A549 (cell line): ENCODE measurements at regions of chr9 and their contacts with region 1.

Region 1: DNA sequence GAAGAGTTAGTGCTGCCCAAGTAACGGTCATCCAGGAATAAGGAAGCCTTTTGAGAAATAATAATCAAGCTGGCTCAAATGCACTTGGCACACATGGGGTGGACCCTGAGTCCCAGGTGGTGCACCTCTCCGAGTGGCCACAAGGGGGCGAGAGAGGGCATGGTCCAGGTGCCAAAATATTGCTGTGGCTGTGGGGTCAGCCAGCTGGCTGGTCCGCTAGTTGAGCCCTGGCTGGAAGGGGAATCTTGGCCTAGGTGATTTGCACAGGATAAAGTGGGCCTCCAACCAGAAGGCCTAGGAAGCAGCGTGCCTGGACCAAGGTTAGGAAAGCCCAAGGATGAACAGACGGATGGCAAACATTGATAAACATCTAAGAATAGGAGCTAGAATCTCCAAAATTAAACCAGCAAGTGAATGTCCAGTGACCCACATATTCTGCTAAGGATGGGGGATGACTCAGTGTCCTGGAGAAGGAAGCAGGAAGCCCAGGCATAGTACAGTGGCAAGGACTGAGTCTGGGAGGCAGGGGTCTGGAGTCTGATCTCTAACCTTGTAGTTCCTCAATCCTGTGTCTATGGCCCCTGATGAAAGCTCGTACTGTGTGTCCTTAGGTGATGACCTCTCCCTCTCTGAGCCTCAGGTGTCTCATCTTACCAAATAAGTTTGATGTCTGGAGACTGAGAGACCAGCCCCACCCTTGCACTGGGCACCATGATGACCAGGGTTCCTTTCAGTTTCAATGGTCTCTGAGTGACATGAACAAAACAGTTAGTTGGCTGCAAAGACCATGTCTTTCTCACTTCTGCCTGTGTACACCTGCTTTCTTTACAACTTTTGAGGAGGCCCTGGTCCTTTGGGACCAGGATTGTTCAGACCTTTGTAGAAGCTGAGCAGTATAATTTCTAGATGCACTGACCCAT is 19.2 kb upstream of the SHB start:
- DNase-seq: peak; percentile 49 to 78
- ATAC-seq: peak; percentile 73 to 90
- H3K4me3 ChIP-seq: no peak overlapping the region
- H3K27ac ChIP-seq: no peak overlapping the region
- H3K4me1 ChIP-seq: no peaks in the 10 kb centered on the region
- CTCF ChIP-seq: peak; percentile 82
- EP300 ChIP-seq: no peak
- POLR2A ChIP-seq: no peak
- RAD21 ChIP-seq: peak; percentile 79 to 83

Region 2: DNA sequence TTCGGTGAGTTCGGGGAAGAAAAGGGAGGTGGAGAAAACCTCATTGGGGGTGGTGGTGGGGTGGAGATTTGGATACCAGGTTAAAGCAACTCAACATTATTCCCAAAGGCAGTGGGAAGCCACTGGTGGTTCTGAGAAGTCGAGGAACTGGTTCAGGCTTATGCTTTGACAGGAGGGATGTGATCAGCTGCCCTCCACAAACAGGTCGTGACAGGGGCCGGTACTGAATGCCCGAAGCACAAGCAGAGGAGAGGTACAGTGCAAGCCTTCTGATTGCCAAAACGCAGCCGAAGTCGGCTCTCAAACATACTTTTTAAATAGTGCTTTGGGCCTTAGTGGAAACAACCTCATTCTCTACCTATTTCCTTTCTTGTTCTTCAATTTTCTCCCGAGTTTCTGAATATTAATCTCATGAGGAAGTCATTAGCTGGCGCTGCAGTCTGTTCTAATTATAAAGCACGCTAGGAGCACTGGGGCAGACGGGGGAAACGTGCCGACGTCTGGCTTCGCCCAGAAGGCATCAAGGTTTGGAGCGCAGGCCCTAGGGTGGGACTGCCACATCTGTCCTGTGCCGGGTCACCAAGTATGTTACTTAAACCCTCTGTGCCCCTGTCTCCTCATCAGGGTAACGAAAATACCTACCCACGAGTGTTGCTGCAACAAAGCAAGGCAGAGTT is 46.6 kb before region 1 on chr9:
- CTCF ChIA-PET with region 1: no interaction called
- POLR2A ChIA-PET with region 1: no interaction called
- DNase-seq: no peak
- ATAC-seq: no peak
- H3K4me3 ChIP-seq: no peak overlapping the region
- H3K27ac ChIP-seq: peak overlapping the region in 1 of 2 experiments; percentile 97; a peak in 3 of 6 replicates
- H3K4me1 ChIP-seq: peaks cover 89% of the 10 kb centered on the region
- CTCF ChIP-seq: no peak
- EP300 ChIP-seq: no peak
- POLR2A ChIP-seq: no peak
- RAD21 ChIP-seq: no peak

Region 3: DNA sequence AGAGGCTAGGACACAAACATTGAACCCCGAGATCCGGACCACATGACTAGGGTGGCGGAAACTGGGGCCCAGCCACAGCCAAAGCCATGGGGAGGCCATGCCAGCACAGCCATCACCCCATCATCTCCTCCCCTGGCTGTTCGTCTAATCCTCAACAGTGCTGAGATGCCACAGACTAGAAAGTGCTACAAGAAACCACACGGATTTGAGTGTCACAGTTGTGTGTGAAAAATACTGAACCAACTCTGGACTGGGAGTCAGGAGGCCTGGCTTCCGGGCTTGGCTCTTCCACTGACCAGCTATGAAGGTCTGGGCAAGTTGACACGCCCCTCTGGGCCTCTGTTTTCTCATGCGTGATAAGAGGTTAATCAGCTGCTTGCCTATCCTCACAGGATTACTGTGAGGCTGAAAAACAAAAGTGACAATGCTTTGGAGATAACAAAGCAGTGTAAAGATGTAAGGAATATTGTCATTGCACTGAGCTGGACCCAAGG is 19.6 kb after region 1 on chr9:
- CTCF ChIA-PET with region 1: interaction called, 24 read pairs
- POLR2A ChIA-PET with region 1: no interaction called
- DNase-seq: no peak
- ATAC-seq: no peak
- H3K4me3 ChIP-seq: no peak overlapping the region
- H3K27ac ChIP-seq: no peak overlapping the region
- H3K4me1 ChIP-seq: no peaks in the 10 kb centered on the region
- CTCF ChIP-seq: no peak
- EP300 ChIP-seq: no peak
- POLR2A ChIP-seq: no peak
- RAD21 ChIP-seq: no peak

Region 4: GRCh38 chr9:38160613-38161215 is 72.4 kb after region 1 on chr9:
- CTCF ChIA-PET with region 1: interaction called, 24 read pairs
- POLR2A ChIA-PET with region 1: no interaction called
- DNase-seq: peak; percentile 56 to 64
- ATAC-seq: peak; percentile 52 to 85; a peak in 3 of 6 replicates
- H3K4me3 ChIP-seq: no peak overlapping the region
- H3K27ac ChIP-seq: no peak overlapping the region
- H3K4me1 ChIP-seq: no peaks in the 10 kb centered on the region
- CTCF ChIP-seq: peak; percentile 73
- EP300 ChIP-seq: no peak
- POLR2A ChIP-seq: no peak
- RAD21 ChIP-seq: peak; percentile 57 to 63

Region 5: GRCh38 chr9:38298503-38298902 is 210.2 kb after region 1 on chr9:
- CTCF ChIA-PET with region 1: interaction called, 12 read pairs
- POLR2A ChIA-PET with region 1: no interaction called
- DNase-seq: no peak
- ATAC-seq: no peak
- H3K4me3 ChIP-seq: no peak overlapping the region
- H3K27ac ChIP-seq: no peak overlapping the region
- H3K4me1 ChIP-seq: no peaks in the 10 kb centered on the region
- CTCF ChIP-seq: no peak
- EP300 ChIP-seq: no peak
- POLR2A ChIP-seq: no peak
- RAD21 ChIP-seq: no peak

Region 6: DNA sequence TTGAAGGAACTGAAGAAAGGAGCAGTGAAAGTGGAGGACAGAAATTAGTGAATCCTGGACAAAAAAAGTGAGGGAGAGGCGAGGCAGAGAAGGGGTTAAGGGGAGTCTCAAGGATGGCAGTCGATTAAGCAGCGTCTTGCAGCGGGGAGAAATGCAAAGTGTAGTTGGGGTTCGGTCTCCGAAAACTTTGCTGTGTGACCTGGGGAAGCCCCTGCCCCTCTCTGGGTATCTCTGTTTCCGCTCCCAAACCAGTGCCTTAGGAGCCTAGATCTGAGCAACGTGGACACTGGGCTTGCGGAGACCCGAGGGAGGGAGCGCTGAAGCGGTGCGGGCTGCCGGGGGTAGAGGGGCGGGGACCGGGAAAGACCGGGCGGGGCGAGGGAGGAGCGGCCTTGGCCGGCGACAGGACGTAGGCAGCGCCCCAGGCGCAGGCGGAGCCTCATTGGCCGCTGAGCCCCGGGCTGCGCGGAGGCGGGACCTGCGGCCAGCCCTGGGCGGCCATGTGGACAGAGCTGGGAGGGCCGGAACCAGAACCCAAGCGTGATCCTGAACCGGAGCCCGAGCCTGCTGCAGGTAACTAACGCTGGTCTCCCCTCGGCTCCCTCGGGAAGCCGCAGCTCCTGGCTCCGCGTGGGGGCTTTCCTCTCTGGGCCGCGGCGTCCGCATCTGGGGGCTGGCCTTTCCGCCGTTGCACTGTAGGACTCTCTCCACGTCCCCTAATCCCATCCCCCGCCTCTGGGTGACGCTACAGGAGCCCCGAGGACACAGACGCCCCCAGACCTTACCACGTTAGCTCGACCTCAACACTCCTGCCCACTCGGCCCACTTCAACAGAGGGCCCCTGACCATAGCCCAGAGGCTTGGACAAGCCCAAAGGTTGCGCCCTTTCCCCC is 304.2 kb after region 1 on chr9 and contains the start of gene ALDH1B1:
- CTCF ChIA-PET with region 1: interaction called, 11 read pairs
- POLR2A ChIA-PET with region 1: no interaction called
- DNase-seq: peak; percentile 86 to 97
- ATAC-seq: peak; percentile 98 to 100
- H3K4me3 ChIP-seq: peak within 1 kb of the TSS; percentile 66
- H3K27ac ChIP-seq: peak within 1 kb of the TSS; percentile 86 to 96
- H3K4me1 ChIP-seq: peaks cover 14% of the 10 kb centered on the region; the same call in 1 of the 3 replicates
- CTCF ChIP-seq: peak; percentile 32; the same call in 2 of the 3 replicates
- EP300 ChIP-seq: no peak
- POLR2A ChIP-seq: peak; percentile 71
- RAD21 ChIP-seq: peak in 1 of 2 experiments; percentile 14; a peak in 1 of 5 replicates
- polyA plus RNA-seq, gene ALDH1B1: 39.7 and 40.2 TPM in 2 replicates